Body of pancreas (tissue), 4 donors: ENCODE measurements at regions of chr11 and their contacts with region 1.

Region 1: GRCh38 chr11:19553683-19554333 is 158.8 kb upstream of the NAV2 start:
- DNase-seq: peak; percentile 78 to 86 (median 85)
- ATAC-seq: peak; percentile 79
- H3K4me3 ChIP-seq: no peak overlapping the region
- H3K27ac ChIP-seq: no peak overlapping the region
- H3K4me1 ChIP-seq: no peaks in the 10 kb centered on the region
- H3K27me3 ChIP-seq: no peaks in the 10 kb centered on the region
- CTCF ChIP-seq: peak; percentile 75 to 88 (median 86)
- POLR2A ChIP-seq: no peak

Region 2: DNA sequence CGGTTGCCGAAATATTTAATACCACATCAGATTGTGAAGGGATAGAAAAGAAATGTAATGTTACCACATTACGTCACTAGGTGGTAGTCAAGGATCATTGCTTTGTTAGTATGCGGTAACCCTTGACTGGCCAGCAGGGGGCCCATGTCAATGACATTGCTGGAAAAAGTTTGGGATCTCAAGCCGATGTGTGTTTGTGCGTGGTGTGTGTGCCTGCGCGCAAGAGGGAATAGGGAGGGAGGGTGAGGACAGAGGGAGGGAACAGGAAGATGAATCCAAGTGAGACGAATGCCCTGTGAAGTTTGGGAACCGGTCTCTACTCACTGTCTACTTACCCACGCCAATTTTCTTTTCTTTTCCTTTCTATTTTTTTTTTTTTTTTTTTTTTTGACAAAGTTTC is 482.6 kb before region 1 on chr11:
- intact Hi-C with region 1: loop called (anchors 5 kb)
- DNase-seq: peak; percentile 80 to 85 (median 82)
- ATAC-seq: peak; percentile 97
- H3K4me3 ChIP-seq: no peak overlapping the region
- H3K27ac ChIP-seq: no peak overlapping the region
- H3K4me1 ChIP-seq: peaks cover 15% of the 10 kb centered on the region
- H3K27me3 ChIP-seq: no peaks in the 10 kb centered on the region
- CTCF ChIP-seq: peak; percentile 87 to 100 (median 99)
- POLR2A ChIP-seq: no peak

Region 3: DNA sequence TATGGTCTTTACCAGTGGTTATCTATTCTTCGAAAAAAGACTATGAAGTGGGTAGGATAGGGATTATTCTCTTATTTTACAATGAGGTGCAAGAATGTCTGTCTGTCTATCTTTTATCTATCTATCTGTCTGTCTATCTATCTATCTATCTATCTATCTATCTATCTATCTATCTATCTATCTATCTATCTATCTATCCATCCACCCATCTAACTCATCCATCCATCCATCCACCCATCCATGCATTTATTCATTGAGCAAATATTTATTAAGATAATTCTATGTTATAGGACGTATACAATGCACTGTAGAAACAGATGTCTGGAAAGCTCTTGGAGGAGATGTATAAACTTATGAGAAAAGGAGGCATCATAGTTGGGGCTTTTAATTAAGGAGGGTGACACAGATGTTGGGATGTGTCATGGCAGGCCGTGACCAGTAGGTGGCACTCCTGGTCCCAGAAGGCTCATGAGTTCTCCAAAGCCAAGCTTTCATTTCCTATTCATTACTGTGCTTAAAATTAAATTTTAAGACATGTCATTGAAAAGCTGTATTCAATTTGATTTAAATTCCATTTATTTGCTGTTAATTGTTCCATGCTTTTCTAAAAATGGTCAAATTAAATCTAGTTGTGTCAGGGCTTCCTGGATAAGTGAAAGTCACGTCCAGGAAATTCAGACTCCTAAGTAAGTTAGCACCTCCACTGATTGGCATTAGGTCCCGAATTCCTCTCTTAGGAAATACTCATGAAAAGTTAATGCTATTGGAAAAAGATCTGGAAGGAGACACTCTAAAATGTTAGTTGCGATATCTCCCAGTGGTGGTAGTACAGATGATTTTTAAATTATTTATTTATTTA is 294.1 kb before region 1 on chr11:
- intact Hi-C with region 1: loop called (anchors 5 kb)
- DNase-seq: peak; percentile 62 to 80 (median 68)
- ATAC-seq: peak; percentile 75
- H3K4me3 ChIP-seq: no peak overlapping the region
- H3K27ac ChIP-seq: no peak overlapping the region
- H3K4me1 ChIP-seq: no peaks in the 10 kb centered on the region
- H3K27me3 ChIP-seq: no peaks in the 10 kb centered on the region
- CTCF ChIP-seq: peak; percentile 74 to 95 (median 78)
- POLR2A ChIP-seq: no peak

Region 4: DNA sequence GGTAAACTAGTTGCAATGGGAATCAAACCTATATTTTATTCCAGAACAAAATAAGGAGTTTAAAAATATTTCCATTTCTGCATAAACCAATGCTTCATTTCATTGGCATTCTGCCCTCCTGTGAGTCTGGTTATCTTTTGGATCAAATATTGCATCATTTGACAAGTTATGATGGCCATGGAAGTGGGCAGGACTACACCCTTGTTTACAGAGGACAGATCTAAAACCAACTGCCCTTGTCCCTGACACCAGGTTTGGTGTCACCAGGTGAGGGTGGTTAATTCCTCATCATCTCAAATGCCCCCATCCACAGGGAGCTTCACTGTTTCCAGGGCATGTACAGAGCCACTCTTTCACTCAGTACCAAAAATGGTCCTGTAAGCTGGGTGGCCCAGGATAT is 284.9 kb before region 1 on chr11:
- intact Hi-C with region 1: loop called (anchors 5 kb)
- DNase-seq: no peak
- ATAC-seq: no peak
- H3K4me3 ChIP-seq: no peak overlapping the region
- H3K27ac ChIP-seq: no peak overlapping the region
- H3K4me1 ChIP-seq: no peaks in the 10 kb centered on the region
- H3K27me3 ChIP-seq: no peaks in the 10 kb centered on the region
- CTCF ChIP-seq: no peak
- POLR2A ChIP-seq: no peak

Region 5: GRCh38 chr11:19311308-19312030 is 242.3 kb before region 1 on chr11:
- intact Hi-C with region 1: loop called (anchors 5 kb)
- DNase-seq: peak; percentile 71 to 79 (median 74)
- ATAC-seq: peak; percentile 87
- H3K4me3 ChIP-seq: no peak overlapping the region
- H3K27ac ChIP-seq: no peak overlapping the region
- H3K4me1 ChIP-seq: no peaks in the 10 kb centered on the region
- H3K27me3 ChIP-seq: no peaks in the 10 kb centered on the region
- CTCF ChIP-seq: peak; percentile 74 to 89 (median 81)
- POLR2A ChIP-seq: no peak

Region 6: GRCh38 chr11:19326499-19326898 is 227.3 kb before region 1 on chr11:
- intact Hi-C with region 1: loop called (anchors 5 kb)
- DNase-seq: no peak
- ATAC-seq: no peak
- H3K4me3 ChIP-seq: no peak overlapping the region
- H3K27ac ChIP-seq: no peak overlapping the region
- H3K4me1 ChIP-seq: no peaks in the 10 kb centered on the region
- H3K27me3 ChIP-seq: no peaks in the 10 kb centered on the region
- CTCF ChIP-seq: peak in 3 of 7 experiments; percentile 19 to 38 (median 31)
- POLR2A ChIP-seq: no peak

Region 7: GRCh38 chr11:20127671-20128527 is 574.1 kb after region 1 on chr11:
- intact Hi-C with region 1: loop called (anchors 10 kb)
- DNase-seq: peak; percentile 75 to 84 (median 81)
- ATAC-seq: peak; percentile 78
- H3K4me3 ChIP-seq: no peak overlapping the region
- H3K27ac ChIP-seq: no peak overlapping the region
- H3K4me1 ChIP-seq: peaks cover 7% of the 10 kb centered on the region
- H3K27me3 ChIP-seq: no peaks in the 10 kb centered on the region
- CTCF ChIP-seq: peak; percentile 41 to 85 (median 83)
- POLR2A ChIP-seq: no peak